ENCODE measurements at regions of chr15 and their contacts with region 1.

Region 1: DNA sequence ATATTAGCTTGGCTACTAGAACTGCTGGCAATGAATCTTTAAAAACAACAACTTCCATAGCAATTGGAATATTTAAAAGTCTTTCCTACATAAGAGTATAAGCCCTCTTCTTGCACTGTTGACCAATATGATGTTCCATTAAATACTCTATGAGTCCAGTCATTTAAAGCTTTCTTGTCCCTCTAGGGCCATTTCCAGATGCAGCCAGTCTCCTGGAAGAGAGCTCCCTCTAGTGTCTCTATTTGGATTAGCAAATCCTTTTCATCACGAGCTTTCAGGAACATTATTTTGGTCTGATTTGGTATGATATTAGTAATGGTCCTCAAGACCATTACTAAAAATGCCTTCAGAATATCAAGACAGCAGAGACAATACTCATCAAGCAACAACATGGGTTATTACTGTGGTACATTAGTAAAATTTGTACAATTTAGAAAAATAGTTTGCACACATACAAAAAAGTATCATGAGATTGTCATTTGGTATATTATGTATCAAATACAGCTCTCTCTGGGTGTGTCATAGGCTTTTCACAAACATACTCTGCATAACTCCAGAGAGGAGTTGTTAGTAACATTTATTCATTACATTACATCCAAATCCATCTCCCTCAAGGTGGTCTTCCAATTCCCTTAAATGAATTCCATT is 101.3 kb downstream of the DPH6 start:
- DNase-seq: peak in 4 of 5 donors; percentile 0 to 16 (median 4)
- H3K4me3 ChIP-seq: no peak overlapping the region
- H3K4me3 Mint-ChIP-seq: no peak overlapping the region
- H3K27ac ChIP-seq: no peak overlapping the region
- H3K27ac Mint-ChIP-seq: no peak overlapping the region
- H3K4me1 ChIP-seq: no peaks in the 10 kb centered on the region
- H3K4me1 Mint-ChIP-seq: peaks cover 0 to 2% (median 0%) of the 10 kb centered on the region in 4 donors
- H3K27me3 ChIP-seq: no peaks in the 10 kb centered on the region
- H3K27me3 Mint-ChIP-seq: no peaks in the 10 kb centered on the region

Region 2: GRCh38 chr15:35061825-35062737 is 382.6 kb before region 1 on chr15:
- CTCF ChIA-PET with region 1: no interaction called
- POLR2A ChIA-PET with region 1: no interaction called
- intact Hi-C with region 1: no loop called
- DNase-seq: no peak
- H3K4me3 ChIP-seq: no peak overlapping the region
- H3K4me3 Mint-ChIP-seq: no peak overlapping the region
- H3K27ac ChIP-seq: no peak overlapping the region
- H3K27ac Mint-ChIP-seq: no peak overlapping the region
- H3K4me1 ChIP-seq: no peaks in the 10 kb centered on the region
- H3K4me1 Mint-ChIP-seq: peaks cover 0 to 1% (median 0%) of the 10 kb centered on the region in 4 donors
- H3K27me3 ChIP-seq: no peaks in the 10 kb centered on the region
- H3K27me3 Mint-ChIP-seq: peaks cover 5 to 11% of the 10 kb centered on the region in 2 donors

Region 3: DNA sequence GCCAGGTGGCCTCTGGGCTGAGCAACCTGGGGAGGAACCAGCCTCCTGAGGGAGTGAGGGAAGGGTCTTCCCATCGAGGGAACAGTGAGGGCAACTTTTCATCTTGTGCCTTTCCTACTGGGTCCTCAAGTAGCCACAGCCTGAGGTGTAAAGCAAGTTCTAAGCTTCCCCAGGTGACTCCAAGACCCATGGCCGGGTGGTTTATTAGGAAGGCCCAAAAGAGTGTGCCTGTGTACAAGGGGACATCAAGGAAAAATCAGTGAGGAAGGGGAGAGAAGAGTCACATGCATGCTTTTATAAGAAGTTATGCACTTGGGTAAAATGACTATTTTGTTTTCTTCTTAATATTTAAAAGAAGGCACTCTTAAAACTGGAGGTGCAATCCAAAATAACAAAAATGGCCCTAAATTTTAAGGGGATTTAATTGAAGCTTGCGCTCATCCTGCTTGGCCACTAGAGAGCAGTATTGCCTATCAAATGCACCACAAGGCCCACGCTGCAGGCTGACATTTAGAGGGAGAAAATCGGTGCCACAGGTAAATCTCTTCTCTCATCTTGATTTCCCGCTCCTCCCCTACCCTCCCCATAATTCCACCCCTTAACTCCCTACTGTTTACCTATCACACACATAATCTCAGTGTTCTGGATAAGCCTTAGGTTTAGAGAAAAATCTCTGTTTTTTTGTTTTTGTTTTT is 366.3 kb before region 1 on chr15:
- CTCF ChIA-PET with region 1: interaction called, 49 read pairs
- POLR2A ChIA-PET with region 1: no interaction called
- intact Hi-C with region 1: no loop called
- DNase-seq: peak in 4 of 5 donors; percentile 12 to 34 (median 18)
- H3K4me3 ChIP-seq: no peak overlapping the region
- H3K4me3 Mint-ChIP-seq: no peak overlapping the region
- H3K27ac ChIP-seq: no peak overlapping the region
- H3K27ac Mint-ChIP-seq: no peak overlapping the region
- H3K4me1 ChIP-seq: no peaks in the 10 kb centered on the region
- H3K4me1 Mint-ChIP-seq: peaks cover 0 to 2% (median 0%) of the 10 kb centered on the region in 4 donors
- H3K27me3 ChIP-seq: no peaks in the 10 kb centered on the region
- H3K27me3 Mint-ChIP-seq: peaks cover 7 to 12% of the 10 kb centered on the region in 2 donors

Region 4: GRCh38 chr15:35430301-35430700 is 14.4 kb before region 1 on chr15:
- CTCF ChIA-PET with region 1: interaction called, 39 read pairs
- POLR2A ChIA-PET with region 1: no interaction called
- intact Hi-C with region 1: no loop called
- DNase-seq: no peak
- H3K4me3 ChIP-seq: no peak overlapping the region
- H3K4me3 Mint-ChIP-seq: no peak overlapping the region
- H3K27ac ChIP-seq: no peak overlapping the region
- H3K27ac Mint-ChIP-seq: no peak overlapping the region
- H3K4me1 ChIP-seq: no peaks in the 10 kb centered on the region
- H3K4me1 Mint-ChIP-seq: peaks cover 0 to 2% (median 0%) of the 10 kb centered on the region in 4 donors
- H3K27me3 ChIP-seq: no peaks in the 10 kb centered on the region
- H3K27me3 Mint-ChIP-seq: no peaks in the 10 kb centered on the region

Region 5: GRCh38 chr15:35458176-35458856 is 13.6 kb after region 1 on chr15:
- CTCF ChIA-PET with region 1: interaction called, 10 read pairs
- POLR2A ChIA-PET with region 1: no interaction called
- intact Hi-C with region 1: no loop called
- DNase-seq: no peak
- H3K4me3 ChIP-seq: no peak overlapping the region
- H3K4me3 Mint-ChIP-seq: no peak overlapping the region
- H3K27ac ChIP-seq: no peak overlapping the region
- H3K27ac Mint-ChIP-seq: no peak overlapping the region
- H3K4me1 ChIP-seq: no peaks in the 10 kb centered on the region
- H3K4me1 Mint-ChIP-seq: peaks cover 0 to 3% (median under 1%) of the 10 kb centered on the region in 4 donors
- H3K27me3 ChIP-seq: no peaks in the 10 kb centered on the region
- H3K27me3 Mint-ChIP-seq: no peaks in the 10 kb centered on the region

Region 6: GRCh38 chr15:35466476-35466875 is 21.8 kb after region 1 on chr15:
- CTCF ChIA-PET with region 1: interaction called, 19 read pairs
- POLR2A ChIA-PET with region 1: no interaction called
- intact Hi-C with region 1: no loop called
- DNase-seq: no peak
- H3K4me3 ChIP-seq: no peak overlapping the region
- H3K4me3 Mint-ChIP-seq: no peak overlapping the region
- H3K27ac ChIP-seq: no peak overlapping the region
- H3K27ac Mint-ChIP-seq: no peak overlapping the region
- H3K4me1 ChIP-seq: no peaks in the 10 kb centered on the region
- H3K4me1 Mint-ChIP-seq: peaks cover 3 to 7% (median 4%) of the 10 kb centered on the region in 4 donors
- H3K27me3 ChIP-seq: no peaks in the 10 kb centered on the region
- H3K27me3 Mint-ChIP-seq: no peaks in the 10 kb centered on the region